ENCODE measurements at regions of chr6 and their contacts with region 1.

Region 1: DNA sequence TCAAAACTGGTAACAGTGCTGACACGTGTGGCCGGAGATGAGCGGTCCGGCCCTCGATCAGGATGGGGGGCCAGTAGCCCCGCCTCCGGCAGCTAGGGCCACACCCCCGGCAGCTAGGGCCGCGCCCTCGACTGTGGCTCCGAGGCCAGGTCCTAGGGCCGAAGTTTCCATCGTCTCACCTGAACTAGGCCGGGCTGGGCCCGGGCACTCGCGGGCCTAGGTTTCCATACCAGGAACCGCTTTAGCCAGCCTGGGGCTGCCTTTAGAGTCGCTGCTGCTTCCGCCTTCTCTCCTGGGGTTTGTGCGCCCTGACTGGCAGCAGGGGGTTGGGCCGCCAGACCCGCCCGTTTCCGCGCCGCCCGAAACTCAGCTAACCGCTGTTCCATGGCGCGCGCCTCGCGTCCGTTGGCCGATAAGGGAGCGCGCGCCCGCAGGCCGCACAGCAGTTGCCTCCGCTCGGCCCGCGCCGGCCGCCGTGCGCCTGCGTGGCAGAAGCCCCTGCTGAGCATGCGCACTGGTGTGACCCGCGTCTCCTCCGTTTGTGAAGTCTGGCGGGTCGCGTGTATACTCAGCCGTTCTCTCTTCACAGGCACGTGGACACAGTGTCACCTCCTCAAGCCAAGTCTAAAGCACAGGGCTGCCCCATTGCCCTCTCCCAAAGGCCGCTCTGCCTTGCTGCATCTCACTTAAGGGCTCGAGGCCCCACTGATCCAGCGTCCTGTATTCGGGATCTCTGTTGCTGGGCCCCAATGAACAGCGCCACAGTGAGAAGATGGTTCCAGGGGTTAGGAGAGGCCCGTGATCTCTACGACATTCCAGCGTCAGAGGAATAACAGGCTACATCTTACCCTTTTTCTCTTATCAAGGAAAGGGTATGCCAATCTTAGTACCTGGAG is at the start of gene SAYSD1:
- DNase-seq: peak; percentile 94
- H3K4me3 ChIP-seq: peak within 1 kb of the TSS; percentile 32 to 64 (median 52)
- H3K27ac ChIP-seq: peak within 1 kb of the TSS; percentile 92 to 96 (median 93)
- H3K4me1 ChIP-seq: peaks cover 5 to 27% (median 15%) of the 10 kb centered on the region in 4 donors
- H3K27me3 ChIP-seq: no peaks in the 10 kb centered on the region
- CTCF ChIP-seq: no peak
- EP300 ChIP-seq: no peak
- POLR2A ChIP-seq: peak; percentile 84
- total RNA-seq, gene SAYSD1: 2.2 to 30.7 (median 21.1) TPM

Region 2: GRCh38 chr6:38326837-38327236 is 788.1 kb before region 1 on chr6:
- in situ Hi-C with region 1: no loop called
- intact Hi-C with region 1: no loop called
- DNase-seq: no peak
- H3K4me3 ChIP-seq: no peak overlapping the region
- H3K27ac ChIP-seq: no peak overlapping the region
- H3K4me1 ChIP-seq: no peaks in the 10 kb centered on the region
- H3K27me3 ChIP-seq: no peaks in the 10 kb centered on the region
- CTCF ChIP-seq: no peak
- EP300 ChIP-seq: no peak
- POLR2A ChIP-seq: no peak

Region 3: DNA sequence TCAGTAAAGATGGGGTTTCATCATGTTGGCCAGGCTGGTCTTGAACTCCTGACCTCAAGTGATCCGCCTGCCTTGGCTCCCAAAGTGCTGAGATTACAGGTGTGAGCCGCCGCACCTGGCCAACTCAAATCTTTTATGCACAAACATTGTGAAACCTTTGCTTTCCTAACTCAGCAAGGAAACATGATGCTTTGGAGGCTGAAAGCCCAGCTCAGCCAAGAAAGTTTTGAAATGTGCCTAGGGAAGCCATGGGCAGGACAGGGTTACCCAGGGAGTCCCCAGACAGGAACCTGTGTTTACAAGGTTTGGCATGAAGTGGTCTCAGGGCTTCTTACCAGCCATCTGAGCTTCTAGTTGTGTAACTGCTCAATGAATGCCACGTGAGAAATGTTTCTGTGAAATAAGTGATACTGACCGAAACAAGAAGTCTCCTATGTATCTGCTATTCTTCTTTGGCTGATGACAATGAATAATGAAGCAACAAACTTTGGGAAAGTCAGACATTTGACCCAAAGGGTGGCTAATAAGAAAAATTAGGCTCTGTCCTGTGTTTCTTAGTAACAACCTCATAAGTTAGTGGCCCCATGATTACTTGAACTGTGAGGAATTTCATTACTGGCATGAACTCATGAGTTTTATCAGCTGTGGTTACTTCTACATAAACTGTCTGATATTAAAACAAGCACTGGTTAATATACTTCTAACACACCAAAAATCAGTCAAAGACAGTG is 446.7 kb after region 1 on chr6:
- in situ Hi-C with region 1: no loop called
- intact Hi-C with region 1: no loop called
- DNase-seq: no peak
- H3K4me3 ChIP-seq: no peak overlapping the region
- H3K27ac ChIP-seq: no peak overlapping the region
- H3K4me1 ChIP-seq: peaks cover 0 to 4% (median 0%) of the 10 kb centered on the region in 4 donors
- H3K27me3 ChIP-seq: no peaks in the 10 kb centered on the region
- CTCF ChIP-seq: no peak
- EP300 ChIP-seq: no peak
- POLR2A ChIP-seq: no peak

Region 4: DNA sequence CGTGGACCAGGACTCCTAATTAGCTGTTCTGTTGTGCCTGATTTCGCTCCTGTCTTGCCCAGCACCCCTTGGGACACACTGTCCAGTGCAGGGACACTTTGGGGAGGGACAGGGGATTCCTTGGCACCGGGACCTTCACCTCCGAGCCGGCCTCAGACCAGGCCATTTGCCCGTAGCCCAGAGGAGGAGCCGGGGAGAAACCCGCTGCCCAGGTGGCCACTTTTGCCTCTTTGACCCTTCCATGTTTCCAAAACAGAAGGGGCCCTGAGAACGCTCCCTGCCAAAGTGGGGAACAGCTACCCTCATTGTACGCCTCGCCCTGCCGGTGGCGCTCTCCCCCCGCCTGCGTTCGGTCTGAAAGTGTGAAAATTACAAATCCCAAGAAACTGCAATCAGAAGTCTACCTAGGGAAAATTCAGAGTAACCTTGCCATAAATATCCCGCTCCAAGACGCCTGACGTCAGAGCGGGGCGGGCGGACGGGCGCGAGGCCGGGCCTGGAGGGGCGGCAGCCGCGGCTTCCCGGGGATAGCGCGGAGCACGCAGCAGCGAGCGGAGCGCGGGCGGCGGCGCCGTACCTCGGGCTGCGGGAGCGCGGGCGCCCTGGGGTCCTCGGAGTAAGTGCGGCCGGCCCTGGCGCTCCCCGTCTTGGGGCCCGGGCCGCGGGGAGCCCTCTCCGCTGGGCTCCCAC is 677.0 kb after region 1 on chr6 and contains the start of gene DAAM2:
- in situ Hi-C with region 1: no loop called
- intact Hi-C with region 1: loop called (anchors 5 kb)
- DNase-seq: peak; percentile 50
- H3K4me3 ChIP-seq: peak within 1 kb of the TSS; percentile 53 to 79 (median 66)
- H3K27ac ChIP-seq: peak within 1 kb of the TSS; percentile 84 to 92 (median 87)
- H3K4me1 ChIP-seq: peaks cover 5 to 19% (median 13%) of the 10 kb centered on the region in 4 donors
- H3K27me3 ChIP-seq: peaks cover 39% of the 10 kb centered on the region
- CTCF ChIP-seq: no peak
- EP300 ChIP-seq: no peak
- POLR2A ChIP-seq: no peak
- total RNA-seq, gene DAAM2: 15.7 to 31.6 (median 20.7) TPM

Measured in transverse colon (tissue), 4 donors.